Activated T-helper 1 cell treated with anti-CD3 and anti-CD28 coated beads, Interleukin-12 subunit alpha, Interleukin-12 subunit beta, Interleukin-2, Interleukin-4 antibody, amounts not matched to agents 30 ng/mL and 10 ng/mL and 1 ng/mL, durations not matched to agents 14 hours and 24 hours and 36 hours (primary cell): ENCODE measurements at regions of chr17 and their contacts with region 1.

Region 1: GRCh38 chr17:1267471-1267947 is 2.7 kb upstream of the BHLHA9 start:
- DNase-seq: no peak
- H3K4me3 Mint-ChIP-seq: peak overlapping the region; percentile 78
- H3K27ac Mint-ChIP-seq: no peak overlapping the region
- H3K4me1 Mint-ChIP-seq: peaks cover 10% of the 10 kb centered on the region
- H3K27me3 Mint-ChIP-seq: peaks cover 33% of the 10 kb centered on the region

Region 2: GRCh38 chr17:1365445-1366039 is 98.0 kb after region 1 on chr17:
- intact Hi-C with region 1: no loop called
- DNase-seq: peak; percentile 48
- H3K4me3 Mint-ChIP-seq: no peak overlapping the region
- H3K27ac Mint-ChIP-seq: no peak overlapping the region
- H3K4me1 Mint-ChIP-seq: peaks cover 47% of the 10 kb centered on the region
- H3K27me3 Mint-ChIP-seq: no peaks in the 10 kb centered on the region

Region 3: GRCh38 chr17:1561400-1562175 is 294.1 kb after region 1 on chr17:
- intact Hi-C with region 1: loop called (anchors 5 kb)
- DNase-seq: peak; percentile 27
- H3K4me3 Mint-ChIP-seq: peak overlapping the region; percentile 88
- H3K27ac Mint-ChIP-seq: peak overlapping the region; percentile 61
- H3K4me1 Mint-ChIP-seq: peaks cover 40% of the 10 kb centered on the region
- H3K27me3 Mint-ChIP-seq: peaks cover 11% of the 10 kb centered on the region